IMR-90 (cell line): ENCODE measurements at regions of chr2 and their contacts with region 1.

Region 1: DNA sequence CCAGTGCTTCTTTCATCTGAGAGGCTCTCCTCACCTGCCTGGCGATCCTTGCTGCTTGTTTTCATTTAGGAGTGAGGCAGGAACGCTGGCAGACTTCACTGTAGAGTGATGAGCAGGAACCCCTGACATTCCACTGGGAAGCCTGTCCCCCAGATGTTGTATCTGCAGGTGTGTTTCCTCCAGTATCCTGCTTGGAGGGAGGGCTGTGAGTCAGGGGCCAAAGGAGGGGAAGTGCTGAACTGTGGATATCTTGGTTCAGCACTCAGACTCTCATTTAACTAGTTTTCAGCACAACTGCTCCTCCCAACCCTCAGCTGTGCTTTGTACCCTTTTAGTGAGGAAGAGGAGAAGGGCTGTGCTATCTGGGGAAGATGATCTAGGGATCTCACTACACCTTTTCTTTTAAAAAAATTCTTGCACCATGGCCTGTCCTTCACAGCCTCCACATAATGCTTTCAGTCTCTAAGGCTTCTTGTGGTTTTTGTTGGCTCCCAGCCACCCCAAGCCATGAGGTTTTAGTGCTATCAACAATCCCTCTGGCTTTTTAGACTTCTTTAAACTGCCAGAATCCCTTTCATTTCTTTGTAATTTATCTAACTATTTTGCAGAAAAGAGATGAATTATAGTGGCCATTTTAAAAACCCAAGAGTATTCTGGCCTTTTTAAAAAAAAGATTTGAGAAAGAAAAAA is 11.2 kb downstream of the ANKAR start:
- DNase-seq: peak; percentile 78
- ATAC-seq: peak; percentile 86
- H3K4me3 ChIP-seq: no peak overlapping the region
- H3K27ac ChIP-seq: no peak overlapping the region
- H3K4me1 ChIP-seq: peaks cover 7% of the 10 kb centered on the region; the same call in 1 of the 2 replicates
- H3K27me3 ChIP-seq: no peaks in the 10 kb centered on the region
- CTCF ChIP-seq: no peak
- POLR2A ChIP-seq: no peak
- RAD21 ChIP-seq: no peak

Region 2: DNA sequence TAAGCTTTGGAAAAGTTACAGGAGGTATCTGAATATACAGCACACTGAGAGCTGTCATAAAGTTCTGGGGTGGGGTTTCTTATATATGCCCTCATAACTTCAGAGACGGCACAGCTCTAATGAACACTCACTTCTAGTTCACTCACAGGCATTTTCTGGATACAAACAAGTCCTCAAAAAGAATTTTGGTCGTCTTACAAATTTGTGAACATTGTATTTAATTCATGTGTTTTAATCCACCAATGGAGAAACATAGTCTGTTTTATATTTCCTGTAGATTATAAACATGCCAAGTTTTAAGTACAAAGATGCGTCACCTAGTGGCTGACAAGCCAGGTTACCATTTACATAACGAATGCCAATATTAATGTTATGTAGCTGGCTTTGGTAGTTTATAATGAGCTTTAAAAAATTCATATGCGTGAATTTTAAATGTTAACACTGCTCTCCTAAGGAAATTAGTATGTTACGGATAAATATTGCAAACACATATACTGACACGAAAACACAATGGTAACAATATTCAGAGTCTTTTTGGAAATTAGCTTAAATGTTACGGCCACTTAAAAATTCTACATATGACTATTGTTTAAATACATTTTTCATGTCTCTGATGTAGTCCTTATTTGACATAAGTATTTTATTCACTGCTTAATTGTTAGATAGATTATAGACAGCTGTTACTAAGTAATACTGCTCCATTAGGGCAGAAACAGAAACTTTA is 709.0 kb before region 1 on chr2:
- CTCF ChIA-PET with region 1: no interaction called
- POLR2A ChIA-PET with region 1: no interaction called
- dilution Hi-C with region 1: no loop called
- in situ Hi-C with region 1: no loop called
- intact Hi-C with region 1: no loop called
- DNase-seq: peak; percentile 81
- ATAC-seq: no peak
- H3K4me3 ChIP-seq: peak overlapping the region; percentile 62
- H3K27ac ChIP-seq: peak overlapping the region; percentile 62; the same call in 1 of the 2 replicates
- H3K4me1 ChIP-seq: no peaks in the 10 kb centered on the region; the same call in 1 of the 2 replicates
- H3K27me3 ChIP-seq: no peaks in the 10 kb centered on the region
- CTCF ChIP-seq: peak; percentile 71
- POLR2A ChIP-seq: no peak
- RAD21 ChIP-seq: peak; percentile 65

Region 3: GRCh38 chr2:189654641-189655040 is 31.0 kb before region 1 on chr2:
- CTCF ChIA-PET with region 1: interaction called, 10 read pairs
- POLR2A ChIA-PET with region 1: no interaction called
- dilution Hi-C with region 1: no loop called
- in situ Hi-C with region 1: no loop called
- intact Hi-C with region 1: no loop called
- DNase-seq: no peak
- ATAC-seq: no peak
- H3K4me3 ChIP-seq: no peak overlapping the region
- H3K27ac ChIP-seq: no peak overlapping the region
- H3K4me1 ChIP-seq: no peaks in the 10 kb centered on the region
- H3K27me3 ChIP-seq: no peaks in the 10 kb centered on the region; the same call in 1 of the 2 replicates
- CTCF ChIP-seq: no peak
- POLR2A ChIP-seq: no peak
- RAD21 ChIP-seq: no peak